HEK293T (cell line): ENCODE measurements at regions of chr12 and their contacts with region 1.

Region 1: DNA sequence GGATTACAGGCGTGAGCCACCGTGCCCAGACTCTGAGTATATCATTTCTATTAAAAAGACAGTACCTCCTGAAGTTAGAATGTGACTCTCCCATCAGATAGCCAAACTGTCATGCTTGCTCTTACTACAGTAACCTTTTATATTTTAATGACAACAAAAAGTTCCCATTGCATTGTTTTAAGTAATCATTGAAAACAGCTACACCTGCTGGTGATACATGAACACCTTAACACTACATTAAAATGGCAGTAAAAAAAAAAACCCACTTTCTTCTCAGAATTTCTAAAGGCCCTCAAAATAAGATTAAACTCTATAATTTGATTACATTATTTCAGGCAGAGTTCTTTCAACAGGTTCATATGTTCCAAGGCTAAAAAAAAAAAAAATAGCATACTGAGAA is 76.7 kb downstream of the SH2B3 start:
- DNase-seq: no peak

Region 2: GRCh38 chr12:111467092-111467856 is 15.2 kb before region 1 on chr12:
- CTCF ChIA-PET with region 1: no interaction called
- POLR2A ChIA-PET with region 1: no interaction called
- DNase-seq: no peak

Region 3: DNA sequence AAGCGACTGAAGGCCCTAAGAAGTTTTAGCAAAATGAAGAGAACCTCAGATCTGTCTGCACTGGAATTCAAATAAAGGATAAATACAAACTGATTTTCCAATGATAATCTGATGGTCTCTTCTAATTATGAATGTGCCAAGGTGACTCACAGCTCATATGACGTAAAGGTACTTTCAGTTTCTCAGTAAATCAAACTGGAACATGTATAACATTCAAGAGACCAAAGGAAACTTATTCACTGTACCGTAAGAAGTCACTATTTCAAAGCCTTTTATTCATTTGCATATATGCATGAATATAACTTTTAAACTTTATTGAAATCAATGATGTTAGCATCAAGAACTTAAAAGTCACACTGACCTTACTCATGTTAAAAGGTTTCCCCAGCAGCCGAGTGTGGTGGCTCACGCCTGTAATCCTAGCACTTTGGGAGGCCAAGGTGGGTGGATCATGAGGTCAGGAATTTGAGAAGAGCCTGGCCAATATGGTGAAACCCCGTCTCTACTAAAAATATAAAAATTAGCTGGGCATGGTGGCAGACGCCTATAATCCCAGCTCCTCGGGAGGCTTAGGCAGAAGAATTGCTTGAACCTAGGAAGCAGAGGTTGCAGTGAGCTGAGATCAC is 64.4 kb after region 1 on chr12:
- CTCF ChIA-PET with region 1: interaction called, 11 read pairs
- POLR2A ChIA-PET with region 1: no interaction called
- DNase-seq: no peak